OCI-LY7 (cell line): ENCODE measurements at regions of chr1 and their contacts with region 1.

Region 1: GRCh38 chr1:196317535-196318522 is 290.4 kb downstream of the KCNT2 start:
- DNase-seq: peak; percentile 3
- H3K4me3 ChIP-seq: no peak overlapping the region
- H3K27ac ChIP-seq: no peak overlapping the region
- H3K4me1 ChIP-seq: no peaks in the 10 kb centered on the region
- CTCF ChIP-seq: peak; percentile 64

Region 2: DNA sequence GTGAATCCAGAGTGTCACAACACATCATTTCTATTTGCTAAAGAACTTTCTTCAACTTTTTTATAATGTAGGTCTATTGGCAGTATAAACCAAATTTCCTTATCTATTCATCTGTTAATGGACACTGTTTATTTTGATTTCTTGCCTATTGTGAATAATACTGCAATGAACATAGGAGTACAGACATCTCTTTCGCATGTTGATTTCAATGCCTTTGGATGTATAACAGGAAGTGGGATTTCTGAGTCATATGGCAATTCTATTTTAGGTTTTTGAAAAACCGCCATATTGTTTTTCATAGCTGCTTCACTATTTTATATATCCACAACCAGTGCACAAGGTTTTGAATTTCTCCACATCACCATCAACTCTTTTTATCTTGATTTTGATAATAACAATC is 91.8 kb after region 1 on chr1:
- CTCF ChIA-PET with region 1: no interaction called
- POLR2A ChIA-PET with region 1: no interaction called
- intact Hi-C with region 1: no loop called
- DNase-seq: no peak
- H3K4me3 ChIP-seq: no peak overlapping the region
- H3K27ac ChIP-seq: no peak overlapping the region
- H3K4me1 ChIP-seq: no peaks in the 10 kb centered on the region
- CTCF ChIP-seq: no peak

Region 3: DNA sequence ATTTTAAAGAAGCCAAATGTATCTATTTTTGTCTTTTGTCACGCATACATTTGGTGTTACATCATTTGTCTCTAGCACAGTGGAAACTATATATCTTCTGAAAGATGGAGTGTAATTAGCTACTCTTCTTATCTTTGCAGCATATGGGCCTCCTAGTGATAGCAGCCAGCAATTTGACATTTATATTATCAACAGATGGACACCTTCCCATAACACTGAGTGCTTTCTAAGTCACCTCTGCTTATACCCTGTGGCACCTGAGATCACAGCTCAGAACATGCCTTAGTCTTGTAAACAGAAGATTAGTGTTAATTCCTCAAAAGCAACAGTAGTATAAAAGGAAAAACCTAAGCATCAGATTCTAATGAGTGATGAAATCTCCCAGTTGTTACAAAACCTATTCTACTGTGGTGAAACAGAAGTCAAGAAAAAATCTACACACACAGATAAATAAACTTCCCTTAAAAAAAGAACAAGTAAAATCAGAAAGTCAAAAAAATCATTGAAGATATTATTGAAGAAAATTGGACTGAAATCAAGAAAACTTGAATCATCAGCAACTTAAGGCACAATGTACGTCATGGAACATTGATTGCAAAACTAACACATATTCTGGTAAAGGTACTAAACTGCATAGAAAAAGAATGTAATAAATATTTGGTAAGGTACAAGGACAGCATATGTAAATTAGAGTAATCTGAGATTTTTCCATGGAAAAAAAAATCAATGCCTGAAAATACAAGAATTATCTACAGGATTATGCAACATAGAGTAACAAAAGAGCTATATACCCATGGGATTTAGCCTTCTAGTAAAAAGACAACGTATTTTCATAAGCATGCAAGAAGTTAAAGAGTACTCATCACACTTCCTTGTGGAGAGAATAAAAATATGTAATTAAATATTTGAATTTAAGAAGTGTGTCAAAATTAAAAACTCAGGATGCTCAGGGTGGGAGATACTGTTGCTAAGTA is 228.7 kb after region 1 on chr1:
- CTCF ChIA-PET with region 1: no interaction called
- POLR2A ChIA-PET with region 1: no interaction called
- intact Hi-C with region 1: no loop called
- DNase-seq: no peak
- H3K4me3 ChIP-seq: no peak overlapping the region
- H3K27ac ChIP-seq: no peak overlapping the region
- H3K4me1 ChIP-seq: no peaks in the 10 kb centered on the region
- CTCF ChIP-seq: no peak

Region 4: GRCh38 chr1:196660852-196661251 is 343.0 kb after region 1 on chr1:
- CTCF ChIA-PET with region 1: no interaction called
- POLR2A ChIA-PET with region 1: no interaction called
- intact Hi-C with region 1: loop called (anchors 5 kb)
- DNase-seq: peak; percentile 39
- H3K4me3 ChIP-seq: no peak overlapping the region
- H3K27ac ChIP-seq: no peak overlapping the region
- H3K4me1 ChIP-seq: no peaks in the 10 kb centered on the region
- CTCF ChIP-seq: peak; percentile 83